ENCODE measurements at regions of chr19 and their contacts with region 1.

Region 1: DNA sequence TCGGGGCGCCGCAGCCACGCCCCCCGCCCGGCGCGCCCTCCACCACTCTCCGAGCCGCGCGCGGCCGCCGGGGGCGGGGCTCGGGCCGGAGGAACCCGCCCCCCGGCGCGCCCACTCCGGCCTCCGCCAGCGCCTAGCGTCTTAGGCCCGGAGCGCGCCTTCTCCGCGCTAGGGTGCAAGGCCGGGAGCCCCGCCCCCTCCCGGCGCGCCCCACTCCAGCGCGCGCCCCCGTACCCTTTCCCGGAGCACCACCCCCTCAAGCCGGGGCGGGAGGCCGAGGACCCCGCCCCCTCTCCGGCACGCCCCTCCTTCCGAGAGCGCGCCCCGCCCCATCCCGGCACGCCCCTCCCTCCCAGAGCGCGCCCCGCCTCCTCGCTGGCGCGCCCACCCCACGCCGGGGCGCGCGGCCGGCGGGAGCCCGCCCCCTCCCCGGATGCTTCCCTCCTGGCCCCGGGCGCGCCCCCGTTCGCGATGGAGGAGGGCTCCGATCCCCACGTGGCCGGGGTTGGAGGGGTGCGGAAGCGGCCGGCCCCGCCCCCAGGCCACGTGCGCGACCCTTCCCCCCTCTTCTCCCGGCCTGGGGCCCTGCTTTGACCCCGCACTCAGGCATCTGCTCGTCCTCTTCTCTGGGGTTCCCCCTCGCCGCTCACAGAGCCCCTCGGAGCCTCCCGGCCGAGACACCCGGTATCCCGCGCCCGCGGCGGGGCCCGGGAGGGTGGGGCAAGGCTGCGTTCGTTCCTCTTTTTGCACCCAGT is 524 bp upstream of the KLF16 start:
- DNase-seq: peak; percentile 98
- H3K4me3 Mint-ChIP-seq: peak overlapping the region; percentile 83
- H3K27ac Mint-ChIP-seq: peak overlapping the region; percentile 89
- H3K4me1 Mint-ChIP-seq: peaks cover 17% of the 10 kb centered on the region
- H3K27me3 Mint-ChIP-seq: no peaks in the 10 kb centered on the region

Region 2: GRCh38 chr19:1837625-1838105 is 26.2 kb before region 1 on chr19:
- intact Hi-C with region 1: no loop called
- DNase-seq: peak; percentile 91
- H3K4me3 Mint-ChIP-seq: no peak overlapping the region
- H3K27ac Mint-ChIP-seq: no peak overlapping the region
- H3K4me1 Mint-ChIP-seq: peaks cover 8% of the 10 kb centered on the region
- H3K27me3 Mint-ChIP-seq: no peaks in the 10 kb centered on the region

Region 3: DNA sequence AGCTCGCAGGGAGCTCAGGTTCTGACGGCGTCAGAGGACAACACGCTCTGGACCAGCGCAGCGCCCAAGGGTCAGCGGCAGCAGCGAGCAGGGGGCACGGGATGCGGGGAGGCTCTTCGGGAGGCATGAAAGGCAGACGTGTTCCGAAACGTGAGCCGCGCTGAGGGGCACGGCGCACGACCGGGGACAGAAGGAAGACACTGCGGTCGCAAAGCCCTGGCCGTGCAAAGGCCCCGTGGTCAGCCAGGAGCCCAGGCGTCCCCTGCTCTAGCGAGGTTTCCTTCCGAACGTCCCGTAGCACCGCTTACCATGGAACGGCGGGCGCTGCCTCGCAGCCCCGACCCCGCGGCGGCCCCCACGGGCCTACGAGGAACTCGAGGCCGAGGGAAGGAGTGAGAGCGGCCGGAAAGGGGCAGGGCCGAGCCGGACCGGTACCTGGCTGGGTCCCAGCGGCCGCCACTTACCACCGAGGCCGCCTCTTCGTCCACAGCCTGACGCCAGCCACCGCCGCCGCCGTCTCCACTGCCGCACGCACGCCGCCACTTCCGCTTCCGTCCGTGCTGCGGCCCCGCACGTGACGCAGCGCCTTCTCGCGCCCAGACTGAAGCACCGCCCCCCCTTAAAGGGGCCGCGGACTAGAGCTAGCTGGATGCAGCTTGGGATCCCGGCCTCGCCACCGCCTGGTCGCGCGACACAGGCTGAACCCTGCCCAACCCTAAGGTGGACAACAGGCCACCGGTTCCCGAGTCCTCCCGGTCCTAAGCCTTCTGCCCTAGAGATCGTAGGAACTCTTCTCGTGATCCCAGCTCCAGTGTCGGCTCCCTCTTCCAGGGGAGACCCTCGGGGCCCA is 12.0 kb after region 1 on chr19:
- intact Hi-C with region 1: loop called (anchors 1 kb)
- DNase-seq: peak; percentile 97
- H3K4me3 Mint-ChIP-seq: peak overlapping the region; percentile 99
- H3K27ac Mint-ChIP-seq: peak overlapping the region; percentile 95
- H3K4me1 Mint-ChIP-seq: peaks cover 16% of the 10 kb centered on the region
- H3K27me3 Mint-ChIP-seq: no peaks in the 10 kb centered on the region

Region 4: GRCh38 chr19:1884719-1885334 is 20.9 kb after region 1 on chr19:
- intact Hi-C with region 1: loop called (anchors 1 kb)
- DNase-seq: peak; percentile 75
- H3K4me3 Mint-ChIP-seq: peak overlapping the region; percentile 93
- H3K27ac Mint-ChIP-seq: peak overlapping the region; percentile 96
- H3K4me1 Mint-ChIP-seq: peaks cover 30% of the 10 kb centered on the region
- H3K27me3 Mint-ChIP-seq: no peaks in the 10 kb centered on the region

Region 5: DNA sequence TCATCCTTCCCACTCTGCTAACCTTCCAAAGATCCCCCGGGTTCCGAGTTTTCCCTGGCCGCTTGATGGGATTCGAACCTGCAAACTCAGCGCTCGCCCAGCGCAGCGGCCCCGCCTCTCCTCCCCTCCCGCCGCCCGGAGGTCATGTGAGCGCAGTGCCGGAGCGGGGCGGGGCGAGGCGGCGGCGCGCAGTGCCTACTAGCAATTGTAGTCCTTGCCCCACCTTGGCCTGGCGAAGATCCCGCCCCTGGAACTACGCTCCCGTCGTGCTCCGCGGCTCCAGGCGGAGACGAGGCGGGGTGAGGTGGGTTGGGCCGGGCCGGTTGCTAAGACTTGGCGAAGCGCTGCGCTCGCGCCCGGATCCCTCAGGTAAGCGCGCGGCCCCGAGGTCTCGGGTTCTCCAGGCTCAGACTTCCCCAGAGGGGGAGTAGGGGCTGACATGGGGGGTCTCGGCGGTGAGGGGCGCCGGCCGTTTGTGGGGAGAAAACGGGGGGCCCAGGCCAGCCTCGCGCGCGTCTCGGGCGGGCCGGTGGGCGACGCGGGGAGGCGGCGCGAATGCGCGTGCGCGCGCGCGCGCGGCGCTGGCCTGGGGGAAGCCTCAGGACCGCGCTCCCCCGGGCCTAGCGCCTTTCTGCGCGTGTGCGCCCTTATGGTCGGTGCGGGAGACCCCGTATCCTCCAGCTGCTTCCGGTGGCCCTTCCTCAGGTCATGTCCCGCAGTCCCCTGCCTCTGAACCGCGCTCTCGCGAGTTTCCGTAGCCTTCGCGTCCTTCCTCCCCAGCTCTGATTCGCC is 41.4 kb after region 1 on chr19 and contains the starts of genes ADAT3 and SCAMP4:
- intact Hi-C with region 1: loop called (anchors 1 kb)
- DNase-seq: peak; percentile 100
- H3K4me3 Mint-ChIP-seq: peak within 1 kb of the TSS; percentile 94
- H3K27ac Mint-ChIP-seq: peak within 1 kb of the TSS; percentile 91
- H3K4me1 Mint-ChIP-seq: peaks cover 34% of the 10 kb centered on the region
- H3K27me3 Mint-ChIP-seq: no peaks in the 10 kb centered on the region
- total RNA-seq, gene ADAT3: 8.8 and 10.6 TPM in 2 replicates
- total RNA-seq, gene SCAMP4: 39.2 and 42.4 TPM in 2 replicates

Region 6: GRCh38 chr19:2096480-2097329 is 232.8 kb after region 1 on chr19 and contains the start of gene IZUMO4:
- intact Hi-C with region 1: loop called (anchors 5 kb)
- DNase-seq: peak; percentile 100
- H3K4me3 Mint-ChIP-seq: peak within 1 kb of the TSS; percentile 90
- H3K27ac Mint-ChIP-seq: peak within 1 kb of the TSS; percentile 94
- H3K4me1 Mint-ChIP-seq: peaks cover 25% of the 10 kb centered on the region
- H3K27me3 Mint-ChIP-seq: no peaks in the 10 kb centered on the region
- total RNA-seq, gene IZUMO4: 9.5 and 10.0 TPM in 2 replicates

Measured in activated CD4-positive, alpha-beta T cell treated with anti-CD3 and anti-CD28 coated beads, Interleukin-2, amount 10 ng/mL, durations not matched to agents 24 days and 14 days (primary cell).